ENCODE measurements at regions of chr2 and their contacts with region 1.

Region 1: DNA sequence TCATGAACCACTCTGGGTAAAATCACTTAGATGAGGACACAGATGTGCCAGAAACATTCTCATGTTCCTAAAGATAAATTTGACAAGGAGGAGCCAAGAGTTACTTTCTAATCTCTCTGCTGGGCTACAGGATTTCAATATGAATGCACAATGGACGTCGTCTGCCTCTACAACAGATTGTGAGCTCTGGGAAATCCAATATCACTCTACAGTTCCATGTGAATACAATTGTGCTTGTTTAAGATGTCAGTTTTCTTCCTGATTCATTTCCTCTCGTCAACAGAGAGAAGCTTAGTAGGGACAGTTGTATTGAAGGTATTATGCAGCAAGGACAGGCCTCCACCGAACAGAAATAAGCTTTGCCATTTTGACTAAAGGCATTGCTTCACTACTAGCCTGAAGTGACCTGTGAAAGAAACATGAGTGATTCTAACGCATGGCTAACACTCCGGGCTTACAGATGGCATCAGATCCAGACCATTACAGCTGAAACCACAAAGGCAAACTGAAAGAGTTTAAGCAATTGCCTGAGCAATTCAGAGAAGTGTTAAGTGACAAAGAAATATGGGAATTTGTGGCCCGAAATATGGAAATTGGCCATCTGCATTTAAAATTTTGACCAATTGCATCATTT is 1591.5 kb downstream of the LRP1B start:
- DNase-seq: no peak
- ATAC-seq: no peak
- H3K4me3 Mint-ChIP-seq: no peak overlapping the region
- H3K27ac Mint-ChIP-seq: no peak overlapping the region
- H3K4me1 Mint-ChIP-seq: no peaks in the 10 kb centered on the region
- H3K27me3 Mint-ChIP-seq: no peaks in the 10 kb centered on the region
- CTCF ChIP-seq: no peak

Region 2: DNA sequence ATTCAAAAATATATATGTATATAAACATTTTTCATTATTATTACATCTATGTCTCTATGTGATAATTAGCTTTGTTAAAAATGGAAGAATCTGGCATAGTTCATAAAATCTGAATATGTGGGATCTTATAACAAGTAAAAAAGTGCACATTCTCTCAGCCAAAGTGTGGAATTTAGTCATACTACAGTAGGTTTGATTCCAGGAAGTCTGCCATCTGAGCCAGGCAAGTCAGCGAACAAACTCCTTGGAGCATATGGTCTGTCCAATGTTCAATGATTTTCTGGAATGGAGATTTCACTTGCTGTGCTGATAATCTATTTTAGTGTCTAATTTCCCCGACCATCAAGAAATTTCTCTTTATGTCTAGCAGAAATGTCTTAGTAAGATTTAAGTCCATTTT is 726.0 kb before region 1 on chr2:
- CTCF ChIA-PET with region 1: no interaction called
- POLR2A ChIA-PET with region 1: interaction called, 11 read pairs
- DNase-seq: no peak
- ATAC-seq: no peak
- H3K4me3 Mint-ChIP-seq: no peak overlapping the region
- H3K27ac Mint-ChIP-seq: no peak overlapping the region
- H3K4me1 Mint-ChIP-seq: peaks cover 12% of the 10 kb centered on the region
- H3K27me3 Mint-ChIP-seq: no peaks in the 10 kb centered on the region
- CTCF ChIP-seq: no peak

Region 3: GRCh38 chr2:140359056-140359771 is 180.1 kb before region 1 on chr2:
- CTCF ChIA-PET with region 1: no interaction called
- POLR2A ChIA-PET with region 1: no interaction called
- DNase-seq: no peak
- ATAC-seq: no peak
- H3K4me3 Mint-ChIP-seq: no peak overlapping the region
- H3K27ac Mint-ChIP-seq: no peak overlapping the region
- H3K4me1 Mint-ChIP-seq: peaks cover 21% of the 10 kb centered on the region
- H3K27me3 Mint-ChIP-seq: no peaks in the 10 kb centered on the region
- CTCF ChIP-seq: no peak

Measured in WTC11 (cell line).